Colonic mucosa (tissue), 4 donors: ENCODE measurements at regions of chr5 and their contacts with region 1.

Region 1: DNA sequence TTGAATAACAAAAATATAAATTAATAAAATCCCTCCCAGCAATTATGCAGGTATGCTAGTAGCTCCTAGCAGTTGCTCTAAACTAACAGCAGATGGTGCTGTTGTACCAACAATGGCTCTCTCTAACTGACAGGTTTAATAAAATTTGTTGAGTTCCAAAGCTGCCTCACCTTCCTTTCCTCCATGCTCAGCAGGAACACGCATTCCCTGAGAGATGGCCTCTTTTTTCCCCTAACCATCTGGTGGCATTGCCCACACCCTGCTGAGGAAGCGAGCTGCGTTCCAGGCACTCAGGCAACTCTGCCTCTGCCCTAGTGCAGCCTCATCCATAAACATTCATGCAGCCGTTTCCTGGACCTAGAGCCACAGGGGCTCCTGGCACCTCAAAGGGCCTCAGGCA is 106.2 kb downstream of the KLHL3 start:
- DNase-seq: no peak
- H3K4me3 ChIP-seq: no peak overlapping the region
- H3K27ac ChIP-seq: no peak overlapping the region
- H3K4me1 ChIP-seq: no peaks in the 10 kb centered on the region
- H3K27me3 ChIP-seq: no peaks in the 10 kb centered on the region
- CTCF ChIP-seq: peak; percentile 95

Region 2: GRCh38 chr5:137405393-137405792 is 224.3 kb before region 1 on chr5:
- intact Hi-C with region 1: no loop called
- DNase-seq: no peak
- H3K4me3 ChIP-seq: no peak overlapping the region
- H3K27ac ChIP-seq: no peak overlapping the region
- H3K4me1 ChIP-seq: no peaks in the 10 kb centered on the region
- H3K27me3 ChIP-seq: no peaks in the 10 kb centered on the region
- CTCF ChIP-seq: no peak

Region 3: GRCh38 chr5:137743031-137743640 is 113.5 kb after region 1 on chr5:
- intact Hi-C with region 1: loop called (anchors 10 kb)
- DNase-seq: peak; percentile 75
- H3K4me3 ChIP-seq: no peak overlapping the region
- H3K27ac ChIP-seq: no peak overlapping the region
- H3K4me1 ChIP-seq: no peaks in the 10 kb centered on the region
- H3K27me3 ChIP-seq: no peaks in the 10 kb centered on the region
- CTCF ChIP-seq: peak; percentile 42

Region 4: GRCh38 chr5:137822158-137822764 is 192.6 kb after region 1 on chr5:
- intact Hi-C with region 1: loop called (anchors 5 kb)
- DNase-seq: peak; percentile 38
- H3K4me3 ChIP-seq: no peak overlapping the region
- H3K27ac ChIP-seq: no peak overlapping the region
- H3K4me1 ChIP-seq: no peaks in the 10 kb centered on the region
- H3K27me3 ChIP-seq: no peaks in the 10 kb centered on the region
- CTCF ChIP-seq: peak; percentile 27

Region 5: GRCh38 chr5:138065102-138065501 is 435.5 kb after region 1 on chr5:
- intact Hi-C with region 1: loop called (anchors 10 kb)
- DNase-seq: no peak
- H3K4me3 ChIP-seq: no peak overlapping the region
- H3K27ac ChIP-seq: no peak overlapping the region
- H3K4me1 ChIP-seq: no peaks in the 10 kb centered on the region
- H3K27me3 ChIP-seq: no peaks in the 10 kb centered on the region
- CTCF ChIP-seq: no peak